ENCODE measurements at regions of chr9 and their contacts with region 1.

Region 1: DNA sequence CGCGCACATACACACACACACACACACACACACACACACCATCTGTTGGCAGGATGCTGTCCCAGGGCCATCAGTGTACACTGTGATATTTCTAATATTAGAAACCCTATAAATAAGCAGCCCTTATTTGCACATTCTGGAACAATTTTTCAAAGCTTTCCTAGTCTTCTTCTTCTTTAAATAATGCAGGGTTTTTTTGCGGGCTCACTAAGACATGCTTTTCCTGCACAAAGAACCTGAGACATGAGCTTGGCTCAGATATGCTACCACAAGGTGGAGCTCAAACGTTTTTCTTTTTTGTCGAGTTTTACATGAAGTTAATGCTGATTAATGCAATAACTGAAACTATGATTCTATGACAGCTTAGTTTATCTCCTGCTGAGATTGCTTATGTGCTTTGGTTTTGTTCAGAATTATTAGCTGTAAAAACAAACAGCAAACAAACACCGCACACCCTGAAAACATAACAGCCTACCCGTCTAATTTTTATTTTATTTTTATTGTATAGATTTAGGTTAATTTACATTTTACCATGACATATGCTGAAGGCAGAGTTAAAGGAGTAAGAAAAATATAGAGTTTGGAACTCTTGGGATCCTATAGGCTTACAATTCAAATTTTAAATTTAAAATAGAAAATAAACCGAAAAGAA is 95.8 kb downstream of the ALDH1A1 start:
- DNase-seq: no peak
- H3K4me3 Mint-ChIP-seq: no peak overlapping the region
- H3K27ac Mint-ChIP-seq: no peak overlapping the region
- H3K4me1 Mint-ChIP-seq: no peaks in the 10 kb centered on the region
- H3K27me3 Mint-ChIP-seq: no peaks in the 10 kb centered on the region

Region 2: GRCh38 chr9:72871685-72872084 is 14.6 kb after region 1 on chr9:
- CTCF ChIA-PET with region 1: no interaction called
- POLR2A ChIA-PET with region 1: no interaction called
- DNase-seq: no peak
- H3K4me3 Mint-ChIP-seq: no peak overlapping the region
- H3K27ac Mint-ChIP-seq: no peak overlapping the region
- H3K4me1 Mint-ChIP-seq: no peaks in the 10 kb centered on the region
- H3K27me3 Mint-ChIP-seq: peaks cover 9% of the 10 kb centered on the region

Region 3: GRCh38 chr9:73023025-73023541 is 166.0 kb after region 1 on chr9:
- CTCF ChIA-PET with region 1: interaction called, 12 read pairs
- POLR2A ChIA-PET with region 1: no interaction called
- DNase-seq: peak; percentile 48
- H3K4me3 Mint-ChIP-seq: no peak overlapping the region
- H3K27ac Mint-ChIP-seq: no peak overlapping the region
- H3K4me1 Mint-ChIP-seq: peaks cover 11% of the 10 kb centered on the region
- H3K27me3 Mint-ChIP-seq: peaks cover 26% of the 10 kb centered on the region

Region 4: GRCh38 chr9:73081979-73082657 is 225.0 kb after region 1 on chr9:
- CTCF ChIA-PET with region 1: interaction called, 20 read pairs
- POLR2A ChIA-PET with region 1: no interaction called
- DNase-seq: no peak
- H3K4me3 Mint-ChIP-seq: no peak overlapping the region
- H3K27ac Mint-ChIP-seq: no peak overlapping the region
- H3K4me1 Mint-ChIP-seq: no peaks in the 10 kb centered on the region
- H3K27me3 Mint-ChIP-seq: peaks cover 18% of the 10 kb centered on the region